A673 (cell line): ENCODE measurements at regions of chr7 and their contacts with region 1.

Region 1: DNA sequence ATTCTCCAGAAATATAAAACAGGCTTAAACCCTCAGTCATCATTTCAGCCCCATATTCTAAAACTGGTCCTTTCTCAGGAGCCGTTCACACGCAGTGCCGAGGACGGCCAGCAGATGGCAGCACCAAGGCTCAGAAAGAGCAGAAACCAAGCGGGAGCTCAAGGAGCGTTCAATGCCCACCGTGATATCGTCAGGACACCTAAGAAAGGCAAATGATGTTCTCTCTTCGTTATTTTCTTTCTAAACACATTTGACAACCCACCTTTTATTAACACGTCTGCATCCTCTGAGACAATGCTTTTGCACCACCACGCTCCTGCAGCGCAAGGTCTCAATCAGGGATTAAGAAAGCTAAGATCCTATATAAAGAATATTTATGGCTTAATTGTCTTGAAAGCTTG is 45.7 kb upstream of the RBM33 start:
- DNase-seq: peak; percentile 84
- H3K4me3 ChIP-seq: no peak overlapping the region
- H3K27ac ChIP-seq: no peak overlapping the region
- H3K4me1 ChIP-seq: no peaks in the 10 kb centered on the region
- H3K27me3 ChIP-seq: peaks cover 20% of the 10 kb centered on the region
- CTCF ChIP-seq: peak; percentile 99

Region 2: DNA sequence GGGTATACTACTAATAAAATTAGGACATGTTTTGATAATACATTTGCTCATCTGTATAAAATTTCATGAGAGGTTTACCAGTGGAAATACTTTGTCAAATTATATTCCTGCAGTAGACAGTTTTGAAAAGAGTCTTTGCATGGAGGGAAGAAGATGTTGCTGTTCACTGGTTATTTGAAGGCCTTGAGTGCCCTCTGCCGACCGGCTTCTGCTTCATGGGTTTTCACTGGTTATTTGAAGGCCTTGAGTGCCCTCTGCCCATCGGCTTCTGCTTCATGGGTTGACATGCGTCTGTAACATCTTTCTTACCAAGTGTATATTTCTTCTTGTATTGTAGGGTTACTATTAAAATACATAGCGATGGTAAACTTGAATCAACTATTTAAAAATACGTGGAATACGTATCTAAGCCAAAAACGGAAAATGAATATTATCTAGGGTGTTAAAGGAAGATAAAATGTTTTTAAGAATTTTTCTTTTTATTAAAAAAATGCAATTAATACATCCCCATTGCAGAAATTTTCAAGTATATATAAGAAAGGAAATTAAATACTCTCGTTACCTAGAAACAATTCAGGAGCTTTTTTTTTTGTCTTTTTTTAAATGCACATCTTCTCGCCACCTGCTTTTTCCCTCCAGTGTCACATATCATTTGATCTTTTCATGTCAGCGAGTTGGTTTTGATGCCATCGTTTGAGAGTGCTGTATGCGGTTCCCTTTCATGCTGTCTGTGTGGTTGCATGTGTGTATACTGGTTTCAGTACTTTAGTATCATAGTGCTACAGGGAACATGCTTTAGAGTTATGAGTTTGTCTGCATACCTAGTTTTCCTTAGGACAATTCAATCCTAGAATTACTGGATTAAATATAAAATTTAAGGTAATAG is 140.1 kb after region 1 on chr7:
- CTCF ChIA-PET with region 1: no interaction called
- POLR2A ChIA-PET with region 1: no interaction called
- intact Hi-C with region 1: loop called (anchors 1 kb)
- DNase-seq: peak; percentile 68
- H3K4me3 ChIP-seq: no peak overlapping the region
- H3K27ac ChIP-seq: no peak overlapping the region
- H3K4me1 ChIP-seq: no peaks in the 10 kb centered on the region
- H3K27me3 ChIP-seq: no peaks in the 10 kb centered on the region
- CTCF ChIP-seq: peak; percentile 66

Region 3: DNA sequence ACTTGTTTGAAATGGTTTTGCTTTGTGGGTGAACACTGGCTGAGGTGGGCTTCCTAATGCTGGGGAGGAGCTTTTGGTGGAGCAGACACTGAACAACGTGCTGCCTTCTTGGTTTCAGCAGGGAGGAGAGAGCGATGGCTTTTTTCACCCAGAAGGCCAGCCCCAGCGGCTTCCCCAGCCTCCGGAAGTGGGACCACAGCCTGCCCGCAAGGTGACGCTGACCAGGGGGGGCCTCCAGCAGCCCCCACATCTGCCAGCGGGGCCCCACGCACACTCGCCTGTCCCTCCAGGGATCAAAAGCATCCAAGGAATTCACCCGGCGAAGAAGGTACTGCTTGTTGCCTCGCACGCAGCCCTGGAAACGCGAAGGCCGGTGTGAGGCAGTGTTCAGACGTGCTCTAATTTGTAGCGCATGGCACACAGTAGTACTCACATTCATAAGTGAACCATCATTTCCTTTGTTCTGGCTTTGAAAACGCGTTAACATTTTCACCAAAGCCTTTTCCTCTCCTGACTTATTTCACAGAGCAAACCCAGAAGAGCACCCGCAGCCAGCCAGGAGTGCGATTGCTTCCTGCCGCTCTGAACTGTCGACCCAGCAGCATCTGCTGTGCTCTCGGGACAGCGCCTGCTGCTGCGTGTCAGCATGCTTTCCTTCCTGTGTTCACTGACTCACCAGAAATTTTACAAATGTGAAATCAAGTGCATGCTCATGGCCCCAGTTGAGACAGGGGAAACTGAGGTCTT is 165.1 kb after region 1 on chr7:
- CTCF ChIA-PET with region 1: interaction called, 21 read pairs
- POLR2A ChIA-PET with region 1: no interaction called
- intact Hi-C with region 1: loop called (anchors 1 kb)
- DNase-seq: peak; percentile 87
- H3K4me3 ChIP-seq: no peak overlapping the region
- H3K27ac ChIP-seq: peak overlapping the region; percentile 78
- H3K4me1 ChIP-seq: peaks cover 26% of the 10 kb centered on the region
- H3K27me3 ChIP-seq: no peaks in the 10 kb centered on the region
- CTCF ChIP-seq: no peak

Region 4: DNA sequence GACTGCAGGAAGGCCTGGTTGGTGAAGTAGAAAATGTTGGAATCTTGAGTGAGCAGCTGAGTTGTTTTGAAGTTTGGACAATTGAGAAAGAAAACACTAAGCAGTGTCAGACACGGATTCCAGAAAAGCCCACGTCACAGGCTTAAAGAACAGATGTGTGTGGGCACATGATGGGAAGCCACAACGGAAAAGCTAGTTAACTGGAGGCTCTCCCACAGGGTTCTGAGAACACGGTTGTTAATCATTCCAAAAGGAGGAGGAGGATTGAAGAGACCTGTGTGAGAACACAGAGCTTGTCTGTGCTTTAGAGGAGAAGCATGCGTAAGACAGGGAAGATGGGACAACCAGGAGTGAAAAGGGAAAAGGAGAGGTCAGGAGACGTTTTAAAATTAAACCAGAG is 170.9 kb after region 1 on chr7:
- CTCF ChIA-PET with region 1: interaction called, 21 read pairs
- POLR2A ChIA-PET with region 1: no interaction called
- intact Hi-C with region 1: loop called (anchors 1 kb)
- DNase-seq: no peak
- H3K4me3 ChIP-seq: no peak overlapping the region
- H3K27ac ChIP-seq: no peak overlapping the region
- H3K4me1 ChIP-seq: peaks cover 3% of the 10 kb centered on the region
- H3K27me3 ChIP-seq: no peaks in the 10 kb centered on the region
- CTCF ChIP-seq: no peak

Region 5: GRCh38 chr7:155870334-155871180 is 271.7 kb after region 1 on chr7:
- CTCF ChIA-PET with region 1: no interaction called
- POLR2A ChIA-PET with region 1: no interaction called
- intact Hi-C with region 1: no loop called
- DNase-seq: no peak
- H3K4me3 ChIP-seq: no peak overlapping the region
- H3K27ac ChIP-seq: no peak overlapping the region
- H3K4me1 ChIP-seq: no peaks in the 10 kb centered on the region
- H3K27me3 ChIP-seq: peaks cover 84% of the 10 kb centered on the region
- CTCF ChIP-seq: no peak